Posterior vena cava (tissue), 2 donors: ENCODE measurements at regions of chr4 and their contacts with region 1.

Region 1: DNA sequence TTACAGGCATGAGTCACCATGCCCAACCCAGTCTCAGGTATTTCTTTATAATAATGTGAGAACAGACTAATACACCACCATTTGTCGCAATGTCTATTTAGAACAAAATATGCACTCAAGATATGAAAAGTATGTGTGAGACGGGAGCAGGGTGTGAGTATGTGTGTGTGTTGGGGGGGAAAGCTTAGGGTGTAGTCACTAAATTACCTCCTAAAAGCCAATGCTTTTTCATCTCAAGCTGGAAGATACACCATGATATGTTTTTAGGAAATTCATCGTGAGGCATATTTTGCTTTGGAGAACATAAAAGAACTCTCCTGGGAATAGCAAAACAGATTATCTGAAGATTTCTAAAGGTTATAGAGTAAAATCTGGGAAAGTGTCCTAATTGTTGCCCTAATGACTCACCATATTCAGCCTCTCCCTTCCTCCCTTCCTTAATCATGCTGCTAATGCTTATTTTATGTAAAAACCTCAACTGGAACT is 262.7 kb downstream of the PDHA2 start:
- DNase-seq: no peak

Region 2: DNA sequence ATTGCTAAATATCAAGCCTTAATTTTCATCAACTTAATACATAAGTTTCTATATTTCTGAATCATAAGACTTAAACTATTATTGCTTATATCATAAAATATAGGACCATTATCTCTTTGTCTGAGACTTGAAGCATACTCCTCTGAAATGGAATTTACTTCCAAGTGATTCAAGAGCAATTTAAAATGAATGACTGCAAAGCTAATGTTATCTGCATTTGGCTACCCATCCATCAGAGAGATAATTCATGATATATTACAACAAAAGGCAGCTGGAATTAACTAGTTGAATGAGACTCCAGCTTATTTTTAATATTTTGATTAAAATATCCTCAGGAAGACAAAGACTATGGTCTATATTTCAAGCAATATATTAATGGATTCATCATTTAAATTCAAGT is 762.4 kb before region 1 on chr4:
- intact Hi-C with region 1: no loop called
- DNase-seq: no peak

Region 3: DNA sequence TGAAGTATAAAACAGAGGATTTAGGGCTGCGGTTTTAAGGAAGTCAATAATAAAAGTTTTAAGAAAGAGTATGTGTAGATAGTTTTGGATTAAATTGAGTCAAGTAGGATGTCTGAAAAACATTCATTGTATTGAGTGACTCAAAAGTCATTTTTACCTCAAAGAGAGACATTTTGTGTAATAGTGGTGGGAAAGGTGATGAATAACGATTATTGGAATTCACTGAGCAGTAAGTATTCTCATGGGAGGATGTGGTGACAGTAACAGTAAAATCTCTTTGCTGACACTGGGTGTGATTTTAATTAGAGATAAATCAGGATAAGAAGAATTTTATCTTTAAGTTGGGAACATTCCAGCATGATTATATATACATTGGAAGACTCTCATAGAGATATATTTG is 29.1 kb before region 1 on chr4:
- intact Hi-C with region 1: loop called in 1 of 2 experiments (anchors 1 kb)
- DNase-seq: no peak